A549 (cell line): ENCODE measurements at regions of chr6 and their contacts with region 1.

Region 1: GRCh38 chr6:24359640-24360454 is 2.0 kb upstream of the DCDC2 start:
- DNase-seq: peak; percentile 60 to 92
- ATAC-seq: peak; percentile 88 to 92
- H3K4me3 ChIP-seq: peak overlapping the region; percentile 34
- H3K27ac ChIP-seq: peak overlapping the region; percentile 79 to 87
- H3K4me1 ChIP-seq: peaks cover 14% of the 10 kb centered on the region; the same call in 2 of the 3 replicates
- CTCF ChIP-seq: peak; percentile 80
- EP300 ChIP-seq: no peak
- POLR2A ChIP-seq: no peak
- RAD21 ChIP-seq: peak; percentile 59 to 75; a peak in 4 of 5 replicates

Region 2: DNA sequence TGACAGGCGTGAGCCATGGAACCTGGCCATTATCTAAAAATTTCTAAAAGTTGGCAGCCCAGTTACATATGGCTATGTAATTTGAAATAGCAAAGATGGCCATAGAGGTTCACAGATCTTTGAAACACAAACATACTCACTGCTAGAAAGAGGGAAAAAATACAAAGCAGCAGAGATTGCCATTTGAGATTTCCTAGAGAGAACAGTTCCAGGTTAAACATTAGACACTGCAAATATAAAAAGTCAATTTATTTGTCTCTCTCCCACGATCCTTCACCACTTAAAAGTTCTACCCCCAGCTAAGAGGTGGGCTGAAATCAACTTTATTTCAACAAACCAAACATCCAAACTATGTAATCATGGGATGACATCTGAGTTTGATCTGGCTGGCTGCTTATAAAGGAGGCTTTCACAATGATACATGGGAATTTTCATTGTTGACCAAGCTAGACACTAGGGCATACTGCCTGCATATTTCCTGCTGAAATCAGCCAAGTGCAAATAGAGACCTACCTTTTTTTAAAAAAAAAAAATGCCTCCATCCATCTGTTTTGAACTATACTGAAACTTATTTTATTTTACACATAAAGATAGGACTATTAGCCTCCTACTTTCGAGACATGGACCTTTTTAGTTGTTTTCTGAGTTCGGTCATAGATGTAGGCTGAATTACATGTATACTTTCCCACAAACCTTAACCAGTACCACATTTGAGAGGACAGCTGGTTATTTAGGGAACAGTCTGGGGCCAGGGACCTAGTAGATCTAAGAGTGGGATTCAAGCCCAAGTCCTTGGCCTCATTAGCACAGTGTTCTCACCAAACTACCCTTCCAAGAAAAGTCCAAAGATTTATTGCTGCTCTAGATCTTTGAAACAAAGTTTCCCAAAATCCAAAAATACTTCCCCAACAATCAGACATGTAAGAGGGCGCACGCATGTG is 18.6 kb before region 1 on chr6:
- CTCF ChIA-PET with region 1: interaction called, 10 read pairs
- POLR2A ChIA-PET with region 1: interaction called, 5 read pairs
- DNase-seq: peak; percentile 65 to 95
- ATAC-seq: peak; percentile 97 to 99
- H3K4me3 ChIP-seq: no peak overlapping the region
- H3K27ac ChIP-seq: peak overlapping the region; percentile 82 to 90
- H3K4me1 ChIP-seq: peaks cover 50% of the 10 kb centered on the region
- CTCF ChIP-seq: no peak
- EP300 ChIP-seq: peak; percentile 97
- POLR2A ChIP-seq: no peak
- RAD21 ChIP-seq: peak; percentile 15 to 48; a peak in 2 of 5 replicates

Region 3: GRCh38 chr6:24394780-24395437 is 35.1 kb after region 1 on chr6:
- CTCF ChIA-PET with region 1: interaction called, 16 read pairs
- POLR2A ChIA-PET with region 1: no interaction called
- DNase-seq: no peak
- ATAC-seq: peak in 1 of 2 experiments; percentile 54; a peak in 2 of 6 replicates
- H3K4me3 ChIP-seq: no peak overlapping the region
- H3K27ac ChIP-seq: peak overlapping the region in 1 of 2 experiments; percentile 35; a peak in 1 of 6 replicates
- H3K4me1 ChIP-seq: 0 out of 3 replicates have a peak, but pooled peaks cover 4% of the 10 kb centered on the region
- CTCF ChIP-seq: no peak
- EP300 ChIP-seq: no peak
- POLR2A ChIP-seq: no peak
- RAD21 ChIP-seq: no peak